Left ventricle myocardium superior (tissue), 1 donor: ENCODE measurements at regions of chr10 and their contacts with region 1.

Region 1: GRCh38 chr10:68959695-68960524 is 3.9 kb downstream of the DDX21 start:
- DNase-seq: no peak
- ATAC-seq: no peak

Region 2: GRCh38 chr10:68924593-68924992 is 35.3 kb before region 1 on chr10:
- intact Hi-C with region 1: loop called (anchors 10 kb)
- DNase-seq: no peak
- ATAC-seq: no peak

Region 3: DNA sequence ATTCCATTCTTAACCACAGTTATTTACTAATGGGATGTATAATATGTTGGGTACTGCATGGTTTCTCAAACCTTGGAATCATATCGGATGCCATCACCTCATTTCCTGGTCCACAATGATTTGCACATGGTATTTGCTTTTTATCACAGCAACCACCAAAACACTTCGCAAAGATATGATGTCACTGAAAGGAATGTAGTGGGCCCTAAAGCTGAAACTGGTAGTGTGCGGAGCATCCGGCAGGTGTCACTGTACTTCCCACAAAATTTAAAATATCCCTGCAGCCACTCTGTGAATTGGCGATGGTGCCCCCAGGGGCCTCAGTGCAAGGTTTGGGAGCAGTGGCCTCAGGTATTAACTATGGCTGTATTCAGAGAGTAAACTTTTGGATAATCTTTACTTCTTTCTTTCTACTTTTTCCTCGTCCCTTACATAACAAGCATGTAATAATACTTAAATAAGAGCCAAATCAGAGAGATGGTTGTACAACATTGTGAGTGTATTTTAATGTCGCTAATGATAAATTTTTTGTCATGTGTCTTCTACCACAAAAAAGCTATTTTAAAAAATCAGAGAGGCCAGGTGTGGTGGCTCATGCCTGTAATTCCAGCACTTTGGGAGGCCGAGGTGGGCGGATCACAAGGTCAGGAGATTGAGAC is 736.3 kb after region 1 on chr10:
- intact Hi-C with region 1: no loop called
- DNase-seq: peak; percentile 51
- ATAC-seq: peak; percentile 66